Ascending aorta (tissue), 2 donors: ENCODE measurements at regions of chr3 and their contacts with region 1.

Region 1: GRCh38 chr3:46866720-46867549 is 3.7 kb upstream of the MYL3 start:
- DNase-seq: peak in 1 of 2 donors; percentile 88
- H3K4me3 ChIP-seq: peak overlapping the region in 1 of 2 donors; percentile 29
- H3K27ac ChIP-seq: peak overlapping the region; percentile 39 to 74
- H3K4me1 ChIP-seq: peaks cover 15 to 25% of the 10 kb centered on the region in 2 donors
- H3K27me3 ChIP-seq: no peaks in the 10 kb centered on the region
- CTCF ChIP-seq: peak; percentile 82 to 93 (median 91)

Region 2: DNA sequence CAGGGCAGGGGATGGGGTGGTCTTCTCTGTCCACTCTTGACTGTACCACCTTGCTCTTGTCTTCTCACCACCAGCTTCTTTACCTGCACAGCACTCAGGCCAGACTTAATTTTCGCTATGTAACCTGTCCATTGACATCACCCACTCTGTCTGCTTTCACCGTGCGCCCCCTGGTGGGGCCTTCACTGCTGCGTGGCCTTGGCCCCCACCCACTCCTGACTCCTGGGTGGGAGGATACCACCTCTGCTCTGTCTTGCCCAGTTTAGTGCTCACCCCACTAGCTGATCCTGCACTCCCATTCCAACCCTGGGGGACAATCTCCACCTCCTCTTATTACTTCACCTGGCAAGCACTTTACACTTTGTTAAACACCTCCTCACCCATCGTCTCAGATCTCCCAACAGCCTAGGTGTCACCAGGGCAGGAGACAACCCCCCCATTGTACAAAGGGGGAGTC is 28.3 kb after region 1 on chr3:
- intact Hi-C with region 1: loop called (anchors 1 kb)
- DNase-seq: no peak
- H3K4me3 ChIP-seq: no peak overlapping the region
- H3K27ac ChIP-seq: no peak overlapping the region
- H3K4me1 ChIP-seq: peaks cover 0 to 39% of the 10 kb centered on the region in 2 donors
- H3K27me3 ChIP-seq: no peaks in the 10 kb centered on the region
- CTCF ChIP-seq: peak; percentile 77 to 90 (median 82)

Region 3: DNA sequence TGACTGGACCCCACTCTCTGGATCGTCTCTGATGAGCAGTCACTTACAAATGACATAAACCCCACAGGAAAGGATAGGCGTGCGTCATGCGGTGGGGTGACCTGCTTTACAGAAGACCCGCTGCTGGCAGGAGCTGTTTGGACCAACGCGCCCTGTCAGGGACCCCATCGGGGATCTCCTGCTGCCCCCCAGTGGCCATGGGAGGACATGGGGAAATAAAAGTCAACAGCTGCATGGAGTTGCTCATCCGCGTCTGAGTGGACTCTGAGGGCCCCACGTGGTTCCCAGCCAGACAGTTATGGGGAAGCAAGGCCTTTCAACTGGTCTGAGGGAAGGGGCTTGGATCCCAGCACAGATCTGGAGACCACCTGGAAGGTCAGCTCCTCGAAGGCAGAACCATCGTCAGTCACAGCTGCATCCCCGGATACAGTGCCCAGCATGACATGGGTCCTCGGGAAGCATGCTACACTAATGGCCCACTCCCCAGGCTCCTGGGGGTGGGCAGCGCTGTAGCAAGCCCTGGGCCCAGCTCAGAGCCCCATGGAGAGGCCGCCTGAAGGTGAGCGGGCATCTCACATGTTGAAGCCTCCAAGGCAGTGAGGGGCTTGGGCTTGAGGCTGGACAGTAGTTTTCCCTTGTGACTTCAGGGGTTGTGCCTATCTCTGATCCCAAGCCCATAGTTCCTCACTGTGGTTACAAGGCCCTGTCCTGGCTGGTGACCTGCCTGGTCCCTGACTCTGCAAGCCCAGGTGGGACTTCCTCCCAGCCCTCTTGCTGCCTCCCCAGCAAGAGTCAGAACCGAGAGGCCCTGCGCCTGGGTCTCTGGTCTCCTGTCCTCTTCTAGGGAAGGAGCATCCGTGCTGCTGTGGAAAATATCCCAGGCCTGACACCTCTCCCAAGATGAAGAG is 42.9 kb after region 1 on chr3:
- intact Hi-C with region 1: loop called (anchors 1 kb)
- DNase-seq: peak; percentile 56 to 92
- H3K4me3 ChIP-seq: peak overlapping the region in 1 of 2 donors; percentile 19
- H3K27ac ChIP-seq: no peak overlapping the region
- H3K4me1 ChIP-seq: peaks cover 14 to 21% of the 10 kb centered on the region in 2 donors
- H3K27me3 ChIP-seq: no peaks in the 10 kb centered on the region
- CTCF ChIP-seq: peak; percentile 83 to 93 (median 88)